ENCODE measurements at regions of chr13 and their contacts with region 1.

Region 1: DNA sequence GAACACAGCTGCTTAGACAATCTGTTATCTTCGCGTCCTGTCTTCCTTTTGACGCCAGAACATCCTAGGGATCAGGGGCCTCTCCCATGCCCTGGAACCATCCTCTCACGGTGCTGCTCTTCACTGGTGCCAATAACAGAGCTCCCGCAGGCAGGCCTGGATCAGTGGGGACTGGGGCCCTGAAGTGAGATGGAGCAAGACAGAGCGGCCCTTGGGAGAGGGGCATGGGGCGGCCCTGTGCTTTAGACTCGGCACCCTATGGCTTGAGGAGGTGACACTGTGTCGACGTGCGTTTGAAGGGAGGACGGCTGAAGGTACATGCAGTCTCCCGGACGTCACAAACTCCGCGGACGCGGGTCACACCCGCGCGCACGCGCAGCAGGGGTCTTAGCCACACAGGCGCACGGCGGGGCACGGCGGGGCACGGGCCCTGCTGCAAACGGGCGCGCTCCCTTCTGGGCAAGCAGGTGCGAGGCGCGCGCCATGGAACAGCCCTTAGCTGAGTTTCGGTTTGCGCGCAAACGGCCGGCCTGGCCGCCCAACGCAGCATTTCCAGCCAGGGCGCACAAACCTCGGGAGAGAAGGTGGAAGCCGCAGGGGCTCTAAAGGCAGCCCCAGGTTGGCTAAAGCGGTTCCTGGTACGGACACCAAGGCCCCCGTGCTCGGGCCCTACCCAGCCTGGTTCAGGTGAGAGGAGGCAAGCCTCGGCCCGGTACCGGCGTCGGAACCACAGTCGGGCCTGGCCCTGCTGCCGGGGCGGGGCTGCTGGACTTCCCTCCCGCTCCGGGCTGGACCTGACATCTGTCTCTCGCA is 16.5 kb upstream of the RNF17 start:
- DNase-seq: peak in 2 of 10 donors; percentile 75 to 87

Region 2: DNA sequence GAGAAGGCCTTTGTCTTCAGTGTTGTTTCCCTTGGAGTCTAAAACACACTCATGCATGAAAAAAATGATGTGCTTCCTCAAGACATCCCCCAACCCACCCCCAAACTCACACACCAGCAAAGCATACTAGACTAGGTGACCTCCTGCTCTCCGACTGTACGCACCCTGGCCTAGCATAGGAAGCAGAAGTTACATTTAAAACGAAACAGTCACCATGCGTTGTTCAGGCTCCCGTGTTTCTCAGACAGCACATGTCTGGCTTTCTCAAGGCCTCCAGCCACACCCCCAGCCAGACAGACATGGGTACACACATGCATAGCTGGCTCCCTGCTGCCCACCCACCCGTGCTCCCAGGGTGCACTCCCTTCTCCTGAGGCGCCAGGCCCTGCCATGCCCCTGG is 466.7 kb before region 1 on chr13:
- intact Hi-C with region 1: no loop called
- DNase-seq: peak in 1 of 10 donors; percentile 40

Region 3: DNA sequence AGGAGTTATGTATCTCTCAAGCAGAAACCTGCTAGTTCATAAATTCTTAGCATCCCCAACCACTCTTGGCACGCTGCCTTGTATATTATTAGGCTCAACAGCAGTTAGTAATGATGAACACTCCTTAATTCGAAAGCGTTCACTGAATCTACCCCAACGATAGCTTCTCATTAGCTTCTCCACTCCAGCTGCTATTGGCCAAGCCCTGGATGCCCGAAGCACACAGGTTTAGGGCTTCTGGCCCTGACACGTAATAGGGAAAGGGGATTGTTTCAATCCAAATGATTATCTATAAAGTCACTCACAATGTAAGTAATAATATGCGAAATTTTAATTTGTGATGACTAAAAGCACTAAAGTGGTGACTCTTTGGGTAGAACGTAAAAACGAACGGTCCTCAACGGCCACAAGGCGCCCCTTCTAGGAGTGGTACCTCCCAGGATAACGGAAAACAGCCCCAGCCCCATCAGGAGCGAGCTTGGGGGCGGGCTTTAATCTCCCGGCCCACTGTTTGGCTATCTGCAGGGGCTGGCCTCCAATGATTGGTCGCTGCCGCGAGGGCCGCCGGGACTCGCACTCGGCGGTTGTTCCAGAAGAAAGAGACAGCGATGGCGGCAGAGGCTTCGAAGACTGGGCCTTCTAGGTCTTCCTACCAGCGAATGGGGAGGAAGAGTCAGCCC is 16.3 kb after region 1 on chr13 and contains the start of gene RNF17:
- intact Hi-C with region 1: loop called (anchors 2 kb)
- DNase-seq: peak in 1 of 10 donors; percentile 48